ENCODE measurements at regions of chr16 and their contacts with region 1.

Region 1: GRCh38 chr16:636206-637080 is at the start of gene METTL26:
- DNase-seq: peak; percentile 89 to 95 (median 91)
- H3K4me3 ChIP-seq: peak within 1 kb of the TSS; percentile 81
- H3K4me3 Mint-ChIP-seq: peak within 1 kb of the TSS; percentile 92 to 99 (median 98)
- H3K27ac ChIP-seq: peak within 1 kb of the TSS; percentile 80
- H3K27ac Mint-ChIP-seq: peak within 1 kb of the TSS; percentile 95 to 100 (median 97)
- H3K4me1 ChIP-seq: peaks cover 21% of the 10 kb centered on the region
- H3K4me1 Mint-ChIP-seq: peaks cover 0 to 20% (median 10%) of the 10 kb centered on the region in 3 donors
- H3K27me3 ChIP-seq: no peaks in the 10 kb centered on the region
- H3K27me3 Mint-ChIP-seq: peaks cover 0 to 7% of the 10 kb centered on the region in 2 donors
- total RNA-seq, gene METTL26: 129 TPM

Region 2: GRCh38 chr16:527006-527753 is 109.3 kb before region 1 on chr16 and contains the start of gene CAPN15:
- CTCF ChIA-PET with region 1: interaction called, 3 read pairs
- POLR2A ChIA-PET with region 1: interaction called, 10 read pairs
- DNase-seq: peak; percentile 78 to 89 (median 87)
- H3K4me3 ChIP-seq: peak within 1 kb of the TSS; percentile 87
- H3K4me3 Mint-ChIP-seq: peak within 1 kb of the TSS; percentile 93 to 97 (median 93)
- H3K27ac ChIP-seq: peak within 1 kb of the TSS; percentile 81
- H3K27ac Mint-ChIP-seq: peak within 1 kb of the TSS; percentile 88 to 99 (median 94)
- H3K4me1 ChIP-seq: peaks cover 35% of the 10 kb centered on the region
- H3K4me1 Mint-ChIP-seq: peaks cover 33 to 44% (median 36%) of the 10 kb centered on the region in 3 donors
- H3K27me3 ChIP-seq: no peaks in the 10 kb centered on the region
- H3K27me3 Mint-ChIP-seq: peaks cover 0 to 1% of the 10 kb centered on the region in 2 donors
- total RNA-seq, gene CAPN15: 91.9 to 98.6 TPM

Region 3: GRCh38 chr16:595942-596735 is 40.3 kb before region 1 on chr16:
- CTCF ChIA-PET with region 1: no interaction called
- POLR2A ChIA-PET with region 1: interaction called, 10 read pairs
- DNase-seq: no peak
- H3K4me3 ChIP-seq: no peak overlapping the region
- H3K4me3 Mint-ChIP-seq: peak overlapping the region in 1 of 7 donors; percentile 28
- H3K27ac ChIP-seq: no peak overlapping the region
- H3K27ac Mint-ChIP-seq: peak overlapping the region in 2 of 8 donors; percentile 14 to 44
- H3K4me1 ChIP-seq: peaks cover 1% of the 10 kb centered on the region
- H3K4me1 Mint-ChIP-seq: peaks cover 20 to 41% (median 22%) of the 10 kb centered on the region in 3 donors
- H3K27me3 ChIP-seq: no peaks in the 10 kb centered on the region
- H3K27me3 Mint-ChIP-seq: no peaks in the 10 kb centered on the region

Region 4: DNA sequence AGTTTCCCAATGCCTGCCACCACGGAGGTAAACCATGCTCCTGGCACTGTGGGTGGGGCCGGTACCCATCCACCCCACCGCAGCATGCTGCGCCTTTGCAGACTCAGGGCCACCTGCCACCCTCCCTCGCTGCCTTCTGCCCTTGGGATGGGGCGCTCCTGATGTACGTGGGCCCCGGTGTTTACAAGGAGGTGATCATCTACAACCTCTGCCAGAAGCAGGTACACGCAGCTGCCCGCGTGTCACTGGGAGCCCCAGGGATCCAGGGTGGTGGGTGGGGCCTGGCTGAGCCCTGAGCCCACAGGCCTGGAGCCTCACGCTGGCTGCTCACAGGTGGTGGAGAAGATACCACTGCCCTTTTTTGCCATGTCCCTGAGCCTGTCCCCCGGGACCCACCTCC is 30.1 kb after region 1 on chr16:
- CTCF ChIA-PET with region 1: no interaction called
- POLR2A ChIA-PET with region 1: no interaction called
- DNase-seq: no peak
- H3K4me3 ChIP-seq: no peak overlapping the region
- H3K4me3 Mint-ChIP-seq: no peak overlapping the region
- H3K27ac ChIP-seq: no peak overlapping the region
- H3K27ac Mint-ChIP-seq: no peak overlapping the region
- H3K4me1 ChIP-seq: peaks cover 10% of the 10 kb centered on the region
- H3K4me1 Mint-ChIP-seq: peaks cover 4 to 19% (median 5%) of the 10 kb centered on the region in 3 donors
- H3K27me3 ChIP-seq: no peaks in the 10 kb centered on the region
- H3K27me3 Mint-ChIP-seq: no peaks in the 10 kb centered on the region

Region 5: GRCh38 chr16:970766-971581 is 334.5 kb after region 1 on chr16 and contains the start of gene LMF1:
- CTCF ChIA-PET with region 1: no interaction called
- POLR2A ChIA-PET with region 1: no interaction called
- DNase-seq: peak; percentile 93 to 97 (median 96)
- H3K4me3 ChIP-seq: peak within 1 kb of the TSS; percentile 73
- H3K4me3 Mint-ChIP-seq: peak within 1 kb of the TSS; percentile 73 to 90 (median 83)
- H3K27ac ChIP-seq: peak within 1 kb of the TSS; percentile 61
- H3K27ac Mint-ChIP-seq: peak within 1 kb of the TSS; percentile 10 to 78 (median 54)
- H3K4me1 ChIP-seq: peaks cover 16% of the 10 kb centered on the region
- H3K4me1 Mint-ChIP-seq: peaks cover 13 to 30% (median 26%) of the 10 kb centered on the region in 3 donors
- H3K27me3 ChIP-seq: no peaks in the 10 kb centered on the region
- H3K27me3 Mint-ChIP-seq: no peaks in the 10 kb centered on the region
- total RNA-seq, gene LMF1: 11.7 to 14.0 TPM